Activated CD8-positive, alpha-beta T cell treated with anti-CD3 and anti-CD28 coated beads, Interleukin-2, amount 10 ng/mL, durations not matched to agents 7 days and 5 days (primary cell): ENCODE measurements at regions of chr16 and their contacts with region 1.

Region 1: GRCh38 chr16:68328151-68328859 is 17.5 kb downstream of the PRMT7 start:
- DNase-seq: peak; percentile 87
- ATAC-seq: peak; percentile 95
- H3K4me3 Mint-ChIP-seq: no peak overlapping the region
- H3K27ac Mint-ChIP-seq: no peak overlapping the region
- H3K4me1 Mint-ChIP-seq: peaks cover 28% of the 10 kb centered on the region
- H3K27me3 Mint-ChIP-seq: no peaks in the 10 kb centered on the region

Region 2: GRCh38 chr16:68128577-68129305 is 199.6 kb before region 1 on chr16:
- CTCF ChIA-PET with region 1: no interaction called
- POLR2A ChIA-PET with region 1: no interaction called
- DNase-seq: no peak
- ATAC-seq: no peak
- H3K4me3 Mint-ChIP-seq: no peak overlapping the region
- H3K27ac Mint-ChIP-seq: peak overlapping the region; percentile 20
- H3K4me1 Mint-ChIP-seq: peaks cover 52% of the 10 kb centered on the region
- H3K27me3 Mint-ChIP-seq: no peaks in the 10 kb centered on the region

Region 3: GRCh38 chr16:68237243-68238028 is 90.9 kb before region 1 on chr16:
- CTCF ChIA-PET with region 1: interaction called, 37 read pairs
- POLR2A ChIA-PET with region 1: no interaction called
- DNase-seq: peak; percentile 92
- ATAC-seq: peak; percentile 78
- H3K4me3 Mint-ChIP-seq: peak overlapping the region; percentile 89
- H3K27ac Mint-ChIP-seq: peak overlapping the region; percentile 93
- H3K4me1 Mint-ChIP-seq: peaks cover 44% of the 10 kb centered on the region
- H3K27me3 Mint-ChIP-seq: no peaks in the 10 kb centered on the region

Region 4: DNA sequence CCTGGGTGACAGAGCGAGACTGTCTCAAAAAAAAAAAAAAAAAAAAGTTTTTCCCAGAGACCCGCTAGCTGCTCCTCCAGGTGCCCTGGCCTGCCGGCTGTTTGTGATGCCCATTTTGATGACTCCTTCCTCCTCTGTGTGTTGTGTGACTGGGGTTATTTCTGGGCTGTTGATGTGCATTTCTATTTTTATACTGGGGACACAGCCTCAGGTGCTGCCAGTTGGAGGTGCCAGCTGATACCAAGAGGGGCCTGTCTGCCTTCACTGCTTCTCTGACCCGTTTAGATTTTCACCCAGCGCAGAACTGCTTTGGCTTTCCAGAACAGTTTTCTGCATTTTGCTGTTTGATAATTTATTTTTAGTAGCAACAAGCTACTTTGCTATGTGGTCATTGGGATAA is 76.5 kb before region 1 on chr16:
- CTCF ChIA-PET with region 1: interaction called, 544 read pairs
- POLR2A ChIA-PET with region 1: no interaction called
- DNase-seq: no peak
- ATAC-seq: no peak
- H3K4me3 Mint-ChIP-seq: no peak overlapping the region
- H3K27ac Mint-ChIP-seq: no peak overlapping the region
- H3K4me1 Mint-ChIP-seq: peaks cover 8% of the 10 kb centered on the region
- H3K27me3 Mint-ChIP-seq: no peaks in the 10 kb centered on the region

Region 5: DNA sequence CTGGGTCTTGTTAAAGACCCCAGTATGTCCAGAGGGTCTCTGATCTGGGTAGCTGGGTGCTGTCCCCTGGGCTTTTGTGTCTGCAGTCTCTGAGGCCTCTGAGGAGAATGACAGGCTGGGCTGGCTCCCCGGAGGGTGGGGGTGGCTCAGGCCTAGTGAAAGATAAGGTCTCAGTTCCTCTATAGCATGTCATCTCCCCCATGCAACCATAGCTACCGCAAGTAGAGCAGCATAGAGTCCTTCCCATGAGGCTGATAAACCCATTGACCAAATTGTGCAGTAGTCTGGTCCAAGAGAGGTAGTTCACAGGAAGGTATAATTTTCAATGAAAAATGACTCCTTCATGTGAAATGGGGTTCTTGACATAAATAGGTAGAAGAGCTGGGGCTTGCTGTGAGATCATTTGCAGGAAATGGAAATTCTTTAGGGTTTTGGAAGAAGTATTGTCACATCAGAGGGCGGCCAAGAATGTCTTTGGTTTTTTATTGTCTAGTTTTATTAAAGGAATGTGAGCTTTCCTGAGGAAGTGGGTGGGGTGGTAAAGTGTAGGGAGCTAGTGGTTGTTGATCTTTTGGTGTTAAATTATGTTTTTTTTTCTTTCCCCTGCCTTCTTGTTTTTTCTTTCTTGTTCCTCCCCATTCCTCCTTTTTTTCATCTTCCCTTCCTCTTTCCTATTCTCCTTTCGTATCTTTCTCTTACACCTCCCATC is 38.5 kb before region 1 on chr16:
- CTCF ChIA-PET with region 1: interaction called, 27 read pairs
- POLR2A ChIA-PET with region 1: no interaction called
- DNase-seq: peak; percentile 74
- ATAC-seq: peak; percentile 74
- H3K4me3 Mint-ChIP-seq: peak overlapping the region; percentile 30
- H3K27ac Mint-ChIP-seq: peak overlapping the region; percentile 84
- H3K4me1 Mint-ChIP-seq: peaks cover 83% of the 10 kb centered on the region
- H3K27me3 Mint-ChIP-seq: no peaks in the 10 kb centered on the region

Region 6: DNA sequence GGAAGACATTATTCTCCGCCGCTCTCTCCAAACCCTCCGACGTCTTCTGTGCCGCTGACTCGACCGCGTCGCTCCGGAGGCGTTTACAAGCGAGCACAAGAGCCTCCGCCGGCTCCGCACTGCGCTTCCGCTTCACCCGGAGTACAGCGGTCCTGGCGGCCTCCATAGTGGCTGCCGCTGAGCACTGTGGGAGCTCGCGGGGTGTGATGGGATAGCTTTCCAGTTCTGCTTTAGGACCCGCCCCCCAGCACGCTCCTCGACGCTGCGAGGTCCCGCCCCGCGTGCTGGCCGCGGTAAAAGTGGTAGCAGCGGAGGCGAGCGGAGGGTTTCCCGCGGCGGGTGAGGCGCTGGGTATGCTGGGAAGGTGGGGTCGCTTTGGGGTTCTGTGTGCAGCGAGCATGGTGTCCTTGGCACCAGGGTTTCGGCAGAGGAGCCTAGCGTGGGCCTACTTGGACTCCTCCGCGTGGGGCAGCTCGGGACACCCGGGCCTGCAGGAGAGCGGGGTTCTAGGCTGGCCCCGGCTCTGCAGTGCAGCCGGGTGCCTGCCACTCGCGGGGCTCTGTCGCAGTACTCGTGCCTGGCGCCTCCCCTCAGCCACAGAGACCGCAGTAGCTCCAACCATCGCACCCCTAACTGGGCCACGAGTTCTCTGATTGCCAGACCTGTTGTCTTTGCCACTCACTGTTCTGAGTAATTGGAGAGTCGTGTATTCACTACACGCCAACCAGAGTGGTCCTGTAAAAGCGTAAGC is 17.4 kb before region 1 on chr16 and contains the starts of genes PRMT7 and SLC7A6OS:
- CTCF ChIA-PET with region 1: interaction called, 45 read pairs
- POLR2A ChIA-PET with region 1: interaction called, 8 read pairs
- DNase-seq: peak; percentile 96
- ATAC-seq: peak; percentile 99
- H3K4me3 Mint-ChIP-seq: peak within 1 kb of the TSS; percentile 89
- H3K27ac Mint-ChIP-seq: peak within 1 kb of the TSS; percentile 88
- H3K4me1 Mint-ChIP-seq: peaks cover 44% of the 10 kb centered on the region
- H3K27me3 Mint-ChIP-seq: no peaks in the 10 kb centered on the region
- total RNA-seq, gene PRMT7: 70.4 to 73.2 TPM
- total RNA-seq, gene SLC7A6OS: 26.3 to 30.7 TPM

Region 7: DNA sequence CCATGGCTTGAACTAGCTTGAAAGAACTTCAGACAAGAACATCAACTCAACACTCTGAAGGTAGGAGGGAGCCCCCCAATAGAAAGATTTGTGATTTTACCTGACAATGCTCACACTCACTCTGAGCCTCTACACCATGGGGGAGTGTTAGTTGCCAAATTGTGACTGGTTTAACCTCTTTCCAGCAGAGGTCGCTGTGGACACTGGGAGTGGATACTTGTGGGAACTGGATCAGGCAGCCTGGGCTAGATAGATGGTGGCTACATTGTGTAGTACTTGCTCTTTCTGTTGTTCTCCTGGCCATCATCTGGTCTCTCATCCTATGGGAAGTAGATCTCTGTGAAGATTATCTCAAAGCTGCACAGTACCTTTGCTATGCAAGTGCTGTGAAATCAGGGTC is 117.2 kb after region 1 on chr16:
- CTCF ChIA-PET with region 1: no interaction called
- POLR2A ChIA-PET with region 1: no interaction called
- DNase-seq: peak; percentile 78
- ATAC-seq: no peak
- H3K4me3 Mint-ChIP-seq: no peak overlapping the region
- H3K27ac Mint-ChIP-seq: no peak overlapping the region
- H3K4me1 Mint-ChIP-seq: peaks cover 18% of the 10 kb centered on the region
- H3K27me3 Mint-ChIP-seq: peaks cover 36% of the 10 kb centered on the region